Activated CD4-positive, alpha-beta memory T cell treated with anti-CD3 and anti-CD28 coated beads for 36 hours (primary cell): ENCODE measurements at regions of chr2 and their contacts with region 1.

Region 1: DNA sequence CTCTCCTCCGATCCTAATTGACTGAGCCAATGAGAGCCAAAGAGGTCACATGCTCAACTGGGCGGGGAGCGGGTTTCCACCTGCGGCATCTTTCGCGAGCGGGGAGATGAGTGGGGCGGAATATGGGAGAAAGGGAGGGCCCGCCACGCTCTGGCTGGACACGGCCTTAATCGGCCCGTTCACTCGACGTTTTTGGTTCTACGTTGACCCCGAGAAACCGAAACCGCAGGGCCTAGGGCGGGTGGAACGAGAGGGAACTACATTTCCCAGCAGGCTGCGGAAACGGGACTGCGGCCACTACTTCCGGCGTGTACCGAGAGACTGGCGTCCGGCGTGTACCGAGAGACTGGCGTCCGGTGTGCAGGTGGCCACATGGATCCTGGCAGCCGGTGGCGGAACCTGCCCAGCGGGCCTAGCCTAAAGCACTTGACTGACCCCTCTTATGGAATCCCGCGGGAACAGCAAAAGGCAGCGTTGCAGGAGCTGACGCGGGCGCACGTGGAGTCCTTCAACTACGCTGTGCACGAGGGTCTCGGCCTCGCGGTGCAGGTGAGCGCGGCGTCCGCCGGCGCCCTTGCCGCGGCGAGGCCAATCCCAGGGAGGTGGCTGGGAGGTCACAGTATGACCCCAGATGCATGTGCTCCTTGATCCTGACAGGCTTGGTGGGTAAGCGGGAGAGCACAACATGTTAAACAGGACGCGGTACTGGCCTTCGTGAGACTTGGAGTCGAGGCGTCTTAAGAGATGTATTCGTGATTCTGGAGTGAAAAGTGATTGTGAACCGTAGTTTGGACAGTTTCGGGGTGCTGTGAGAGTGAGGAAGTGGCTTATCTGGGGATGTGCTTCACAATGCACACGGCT is at the start of gene POLR1B:
- DNase-seq: peak; percentile 84
- H3K4me3 Mint-ChIP-seq: no peak within 1 kb of the TSS
- H3K27ac Mint-ChIP-seq: no peak within 1 kb of the TSS
- H3K4me1 Mint-ChIP-seq: peaks cover 21% of the 10 kb centered on the region
- H3K27me3 Mint-ChIP-seq: no peaks in the 10 kb centered on the region
- total RNA-seq, gene POLR1B: 50.7 to 55.3 TPM

Region 2: DNA sequence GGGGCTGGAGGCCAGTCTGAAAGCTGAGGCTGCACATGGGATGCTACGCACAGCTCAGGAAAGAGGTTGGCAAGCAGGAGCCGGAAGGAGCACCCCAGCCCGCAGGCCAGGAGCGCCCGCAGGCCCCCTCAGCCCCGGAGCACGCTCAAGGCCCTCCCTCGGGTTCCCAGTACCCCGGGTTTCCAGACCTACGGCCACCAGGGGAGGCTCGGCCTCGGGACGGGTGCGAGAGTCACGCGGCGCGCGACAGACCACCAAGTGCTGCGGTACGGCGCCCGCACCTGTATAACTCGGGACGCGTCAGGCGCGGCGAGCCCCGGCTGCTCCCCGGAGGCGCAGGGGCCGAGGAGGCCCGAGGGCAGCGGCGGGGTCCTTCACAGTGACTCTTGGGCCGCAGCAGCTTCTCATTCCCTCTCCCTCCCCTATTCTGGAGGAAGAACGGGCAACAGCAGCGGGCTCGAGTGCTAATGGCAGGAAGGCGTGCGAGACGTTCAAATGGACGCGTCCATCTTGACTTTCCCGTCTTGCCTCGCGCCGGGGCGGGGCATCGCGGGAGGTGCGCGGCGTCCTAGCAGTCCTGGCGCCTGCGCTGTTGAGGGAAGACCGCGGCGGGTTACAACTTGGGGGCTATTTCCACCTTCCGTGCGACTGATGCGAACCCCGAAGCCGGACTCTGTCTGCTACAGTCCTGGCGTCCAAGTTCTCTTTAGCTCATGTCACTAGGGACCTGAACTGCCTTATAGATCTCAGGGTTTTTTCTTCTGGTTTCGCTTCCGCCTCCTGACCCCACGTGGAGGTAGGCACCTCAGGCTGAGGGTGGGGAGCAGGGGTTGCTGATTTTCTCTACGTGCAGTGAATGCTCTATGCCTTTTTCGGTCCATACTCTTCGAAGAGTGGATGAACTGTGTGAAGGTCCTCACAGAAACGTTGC is 658.4 kb before region 1 on chr2 and contains the start of gene ANAPC1:
- CTCF ChIA-PET with region 1: no interaction called
- POLR2A ChIA-PET with region 1: interaction called, 4 read pairs
- intact Hi-C with region 1: loop called (anchors 5 kb)
- DNase-seq: peak; percentile 90
- H3K4me3 Mint-ChIP-seq: peak within 1 kb of the TSS; percentile 97
- H3K27ac Mint-ChIP-seq: peak within 1 kb of the TSS; percentile 94
- H3K4me1 Mint-ChIP-seq: peaks cover 15% of the 10 kb centered on the region
- H3K27me3 Mint-ChIP-seq: no peaks in the 10 kb centered on the region
- total RNA-seq, gene ANAPC1: 88.8 to 90.2 TPM

Region 3: DNA sequence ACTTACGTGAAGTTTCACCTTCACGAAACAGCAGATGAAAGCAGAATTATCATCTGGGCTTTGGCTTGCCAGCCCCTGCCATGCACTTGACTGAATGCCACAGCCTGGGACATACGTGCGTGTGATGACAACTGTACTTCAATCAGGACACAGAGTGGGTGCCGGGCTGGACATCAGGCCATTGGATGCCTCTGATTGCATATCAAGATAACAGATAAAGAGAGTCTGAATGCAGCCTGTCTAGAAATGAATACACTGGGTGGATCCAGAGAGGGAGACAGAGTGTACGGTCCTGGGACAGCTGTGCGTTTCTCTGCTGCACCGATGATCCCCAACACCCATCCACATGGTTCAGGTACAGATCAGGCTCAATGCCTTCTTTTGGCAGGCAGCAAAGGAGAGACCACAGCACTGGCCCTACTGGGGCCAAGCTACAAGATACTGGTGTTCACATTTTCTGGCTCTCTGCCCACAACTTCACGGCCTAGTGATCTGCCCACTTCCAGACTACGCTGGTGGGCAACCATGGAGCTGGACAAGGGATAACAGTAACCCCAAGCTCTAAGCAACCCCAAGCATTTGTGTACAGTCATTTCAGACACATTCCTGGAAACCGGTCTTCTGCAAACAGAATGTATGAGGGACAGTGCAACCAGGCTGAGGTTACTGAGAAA is 368.6 kb before region 1 on chr2:
- CTCF ChIA-PET with region 1: no interaction called
- POLR2A ChIA-PET with region 1: no interaction called
- intact Hi-C with region 1: no loop called
- DNase-seq: peak; percentile 34
- H3K4me3 Mint-ChIP-seq: peak overlapping the region; percentile 17
- H3K27ac Mint-ChIP-seq: peak overlapping the region; percentile 54
- H3K4me1 Mint-ChIP-seq: peaks cover 21% of the 10 kb centered on the region
- H3K27me3 Mint-ChIP-seq: no peaks in the 10 kb centered on the region

Region 4: DNA sequence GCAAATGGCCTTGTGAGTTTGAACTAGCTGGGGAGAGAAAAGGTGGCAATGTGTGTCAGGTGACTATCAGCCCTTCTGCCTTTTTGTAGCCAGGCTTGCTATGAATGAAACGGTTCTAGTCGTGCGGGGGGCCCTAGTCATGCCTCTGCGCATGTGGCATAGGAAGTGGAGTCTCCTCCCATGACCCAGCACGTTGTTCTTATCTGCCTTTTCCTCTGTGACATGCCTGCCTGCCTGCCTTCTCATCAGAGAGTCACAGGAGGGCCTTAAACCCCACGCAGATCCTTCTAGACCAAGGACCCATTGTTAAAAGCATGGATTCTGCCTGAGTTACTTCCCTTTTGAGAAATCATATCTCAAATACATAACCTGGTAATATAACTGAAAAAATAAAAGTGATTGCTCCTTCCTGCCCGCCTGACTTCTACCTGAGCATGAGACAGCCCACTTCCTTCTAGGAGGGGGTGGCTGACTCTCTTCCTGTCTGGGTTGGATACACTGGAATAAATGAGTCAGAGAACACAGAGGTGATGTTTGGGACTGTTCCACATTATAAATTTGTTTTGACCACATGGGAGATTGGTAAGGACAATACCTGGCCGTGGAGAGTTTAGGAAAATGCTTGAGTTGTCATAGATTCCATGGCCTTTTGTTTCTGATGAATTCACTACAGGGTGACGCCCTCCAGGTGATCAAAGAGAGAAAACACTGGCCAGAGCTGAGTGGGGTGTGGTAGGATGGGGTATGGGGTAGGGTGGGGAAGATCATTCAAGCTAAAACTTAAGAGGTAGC is 354.4 kb before region 1 on chr2:
- CTCF ChIA-PET with region 1: no interaction called
- POLR2A ChIA-PET with region 1: no interaction called
- intact Hi-C with region 1: loop called (anchors 5 kb)
- DNase-seq: peak; percentile 91
- H3K4me3 Mint-ChIP-seq: peak overlapping the region; percentile 38
- H3K27ac Mint-ChIP-seq: peak overlapping the region; percentile 94
- H3K4me1 Mint-ChIP-seq: peaks cover 85% of the 10 kb centered on the region
- H3K27me3 Mint-ChIP-seq: no peaks in the 10 kb centered on the region

Region 5: GRCh38 chr2:112481050-112481527 is 61.3 kb before region 1 on chr2:
- CTCF ChIA-PET with region 1: interaction called, 7 read pairs
- POLR2A ChIA-PET with region 1: no interaction called
- intact Hi-C with region 1: loop called (anchors 1 kb)
- DNase-seq: peak; percentile 92
- H3K4me3 Mint-ChIP-seq: peak overlapping the region; percentile 81
- H3K27ac Mint-ChIP-seq: peak overlapping the region; percentile 77
- H3K4me1 Mint-ChIP-seq: peaks cover 28% of the 10 kb centered on the region
- H3K27me3 Mint-ChIP-seq: no peaks in the 10 kb centered on the region

Region 6: GRCh38 chr2:112645310-112646101 is 103.2 kb after region 1 on chr2 and contains the start of gene SLC20A1:
- CTCF ChIA-PET with region 1: no interaction called
- POLR2A ChIA-PET with region 1: no interaction called
- intact Hi-C with region 1: loop called (anchors 1 kb)
- DNase-seq: peak; percentile 98
- H3K4me3 Mint-ChIP-seq: peak within 1 kb of the TSS; percentile 97
- H3K27ac Mint-ChIP-seq: peak within 1 kb of the TSS; percentile 87
- H3K4me1 Mint-ChIP-seq: peaks cover 52% of the 10 kb centered on the region
- H3K27me3 Mint-ChIP-seq: no peaks in the 10 kb centered on the region
- total RNA-seq, gene SLC20A1: 88.8 to 91.3 TPM